ENCODE measurements at regions of chr16 and their contacts with region 1.

Region 1: GRCh38 chr16:12095275-12096156 is 119.0 kb downstream of the SNX29 start:
- DNase-seq: no peak
- H3K4me3 ChIP-seq: no peak overlapping the region
- CTCF ChIP-seq: peak; percentile 74

Region 2: GRCh38 chr16:11901091-11901490 is 194.4 kb before region 1 on chr16:
- CTCF ChIA-PET with region 1: no interaction called
- POLR2A ChIA-PET with region 1: no interaction called
- DNase-seq: no peak
- H3K4me3 ChIP-seq: no peak overlapping the region
- CTCF ChIP-seq: no peak

Region 3: GRCh38 chr16:12067714-12068401 is 27.7 kb before region 1 on chr16:
- CTCF ChIA-PET with region 1: interaction called, 14 read pairs
- POLR2A ChIA-PET with region 1: no interaction called
- DNase-seq: peak; percentile 46
- H3K4me3 ChIP-seq: no peak overlapping the region
- CTCF ChIP-seq: peak; percentile 81

Region 4: DNA sequence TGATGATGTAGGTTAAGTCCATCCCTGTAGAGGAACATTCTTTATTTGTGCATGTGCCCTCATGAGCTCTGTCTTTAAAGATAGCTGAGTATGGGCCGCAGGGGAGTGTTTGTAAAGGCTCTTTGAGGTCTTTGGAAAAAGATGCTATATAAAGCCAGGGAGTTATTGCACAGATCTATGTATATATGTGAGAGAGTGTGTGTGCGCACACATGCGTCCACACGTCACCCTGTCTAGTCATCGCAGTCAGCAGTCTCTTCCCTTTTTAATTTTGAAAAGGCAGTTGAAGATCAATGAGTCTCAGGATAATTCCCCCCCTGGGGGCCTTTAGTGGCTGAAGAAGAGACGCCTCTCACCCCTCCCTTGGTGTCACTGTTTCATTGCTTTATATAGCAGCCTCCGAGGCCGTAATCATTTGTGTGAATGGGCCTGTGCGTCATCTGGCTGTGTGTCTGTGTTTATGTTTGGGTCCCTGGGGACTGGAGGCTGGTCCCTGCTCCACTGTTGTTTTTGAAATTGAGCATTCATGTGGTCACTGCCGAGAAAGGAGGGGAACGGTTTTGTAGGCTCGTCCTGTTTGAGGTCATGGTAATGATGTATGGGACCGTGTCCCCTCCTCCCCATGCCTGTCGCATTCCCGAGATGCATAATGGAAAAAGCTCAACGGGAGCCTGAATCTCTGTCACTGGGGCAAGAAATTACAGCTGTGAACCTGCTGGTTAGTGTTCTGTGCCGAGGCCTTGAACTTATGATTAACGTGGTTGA is 24.9 kb after region 1 on chr16:
- CTCF ChIA-PET with region 1: interaction called, 11 read pairs
- POLR2A ChIA-PET with region 1: no interaction called
- DNase-seq: peak; percentile 72
- H3K4me3 ChIP-seq: no peak overlapping the region; the same call in 1 of the 2 replicates
- CTCF ChIP-seq: no peak

Region 5: GRCh38 chr16:12193031-12193430 is 97.5 kb after region 1 on chr16:
- CTCF ChIA-PET with region 1: interaction called, 16 read pairs
- POLR2A ChIA-PET with region 1: no interaction called
- DNase-seq: no peak
- H3K4me3 ChIP-seq: no peak overlapping the region
- CTCF ChIP-seq: no peak

Region 6: GRCh38 chr16:12228602-12229499 is 133.3 kb after region 1 on chr16:
- CTCF ChIA-PET with region 1: interaction called, 121 read pairs
- POLR2A ChIA-PET with region 1: no interaction called
- DNase-seq: no peak
- H3K4me3 ChIP-seq: no peak overlapping the region
- CTCF ChIP-seq: peak; percentile 92

Region 7: DNA sequence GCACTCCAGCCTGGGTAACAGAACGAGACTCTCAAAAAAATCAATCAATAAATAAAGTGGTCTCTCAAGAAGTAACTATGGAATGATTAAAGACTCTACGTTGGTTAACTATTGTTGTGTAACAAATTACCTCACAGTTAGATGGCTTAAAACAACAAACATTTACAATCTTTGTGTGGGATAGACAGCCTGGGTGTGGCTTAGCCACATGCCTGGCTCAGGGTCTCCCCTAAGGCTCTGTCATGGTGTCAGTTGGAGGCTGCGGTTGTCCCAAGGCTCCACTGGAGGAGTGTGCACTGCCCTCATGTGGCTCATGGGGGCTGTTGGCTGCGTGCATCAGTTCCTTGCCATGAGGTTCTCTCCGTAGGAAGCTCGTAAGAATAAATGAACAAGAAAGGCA is 175.5 kb after region 1 on chr16:
- CTCF ChIA-PET with region 1: interaction called, 94 read pairs
- POLR2A ChIA-PET with region 1: no interaction called
- DNase-seq: no peak
- H3K4me3 ChIP-seq: no peak overlapping the region
- CTCF ChIP-seq: peak; percentile 48

Region 8: DNA sequence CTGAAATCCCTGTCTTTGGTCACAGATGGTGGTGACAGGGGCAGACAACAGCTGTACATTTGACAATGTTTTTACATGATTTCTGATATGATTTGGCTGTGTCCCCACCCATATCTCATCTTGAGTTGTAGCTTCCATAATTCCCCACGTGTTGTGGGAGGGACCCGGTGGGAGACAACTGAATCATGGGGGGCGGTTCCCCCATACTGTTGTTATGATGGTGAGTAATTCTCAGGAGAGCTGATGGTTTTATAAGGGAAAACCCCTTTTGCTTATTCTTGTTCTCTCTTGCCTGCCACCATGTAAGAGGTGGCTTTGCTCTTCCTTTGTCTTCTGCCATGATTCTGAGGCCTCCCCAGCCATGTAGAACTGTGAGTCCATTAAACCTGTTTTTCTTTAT is 354.3 kb after region 1 on chr16:
- CTCF ChIA-PET with region 1: interaction called, 12 read pairs
- POLR2A ChIA-PET with region 1: no interaction called
- DNase-seq: no peak
- H3K4me3 ChIP-seq: no peak overlapping the region
- CTCF ChIP-seq: no peak

Measured in AG04449 (cell line).